ENCODE measurements at regions of chr19 and their contacts with region 1.

Region 1: GRCh38 chr19:1249298-1249989 is 1.1 kb downstream of the MIDN start:
- DNase-seq: no peak
- ATAC-seq: peak; percentile 46
- H3K4me3 ChIP-seq: peak overlapping the region; percentile 91
- H3K27ac ChIP-seq: peak overlapping the region; percentile 82
- H3K4me1 ChIP-seq: peaks cover 16% of the 10 kb centered on the region
- H3K27me3 ChIP-seq: no peaks in the 10 kb centered on the region
- CTCF ChIP-seq: no peak
- EP300 ChIP-seq: no peak
- POLR2A ChIP-seq: peak; percentile 90
- RAD21 ChIP-seq: no peak

Region 2: GRCh38 chr19:1260636-1261537 is 11.4 kb after region 1 on chr19:
- CTCF ChIA-PET with region 1: interaction called, 363 read pairs
- POLR2A ChIA-PET with region 1: interaction called, 184 read pairs
- RAD21 ChIA-PET with region 1: interaction called, 336 read pairs
- SMC1A ChIA-PET with region 1: interaction called, 172 read pairs
- in situ Hi-C with region 1: no loop called
- intact Hi-C with region 1: loop called (anchors 1 kb)
- DNase-seq: peak; percentile 85
- ATAC-seq: peak; percentile 69
- H3K4me3 ChIP-seq: peak overlapping the region; percentile 92
- H3K27ac ChIP-seq: peak overlapping the region; percentile 96
- H3K4me1 ChIP-seq: peaks cover 54% of the 10 kb centered on the region
- H3K27me3 ChIP-seq: no peaks in the 10 kb centered on the region
- CTCF ChIP-seq: no peak
- EP300 ChIP-seq: 0 out of 4 replicates have a peak, but pooled peaks of 1 of the 2 experiments have one; percentile 19
- POLR2A ChIP-seq: peak; percentile 39; the same call in 1 of the 2 replicates
- RAD21 ChIP-seq: no peak

Region 3: DNA sequence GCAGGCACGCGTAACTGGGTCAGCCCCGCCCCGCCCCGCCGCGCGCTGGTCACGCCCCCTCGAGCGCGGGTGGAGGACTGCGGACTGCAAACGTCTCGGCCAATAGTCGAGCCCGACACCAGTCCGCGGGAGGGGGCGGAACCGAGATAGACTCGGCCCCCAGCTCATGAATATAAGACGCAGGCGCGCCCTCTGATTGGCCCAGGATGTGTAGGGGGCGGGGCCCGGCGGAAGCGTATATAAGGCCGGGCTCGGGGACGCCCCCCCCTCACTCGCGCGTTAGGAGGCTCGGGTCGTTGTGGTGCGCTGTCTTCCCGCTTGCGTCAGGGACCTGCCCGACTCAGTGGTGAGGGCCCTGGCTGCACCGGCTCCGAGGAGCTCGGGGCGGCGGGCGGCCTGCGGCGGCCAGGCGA is 19.6 kb after region 1 on chr19 and contains the start of gene CIRBP:
- CTCF ChIA-PET with region 1: interaction called, 363 read pairs
- POLR2A ChIA-PET with region 1: interaction called, 184 read pairs
- RAD21 ChIA-PET with region 1: interaction called, 336 read pairs
- SMC1A ChIA-PET with region 1: interaction called, 172 read pairs
- in situ Hi-C with region 1: no loop called
- intact Hi-C with region 1: loop called (anchors 1 kb)
- DNase-seq: peak; percentile 86
- ATAC-seq: peak; percentile 70
- H3K4me3 ChIP-seq: peak within 1 kb of the TSS; percentile 98
- H3K27ac ChIP-seq: peak within 1 kb of the TSS; percentile 98
- H3K4me1 ChIP-seq: peaks cover 47% of the 10 kb centered on the region
- H3K27me3 ChIP-seq: no peaks in the 10 kb centered on the region
- CTCF ChIP-seq: no peak
- EP300 ChIP-seq: no peak
- POLR2A ChIP-seq: no peak
- RAD21 ChIP-seq: no peak
- polyA plus RNA-seq, gene CIRBP: 27.6 to 52.4 TPM

Measured in GM12878 (cell line).